Activated naive CD4-positive, alpha-beta T cell treated with anti-CD3 and anti-CD28 coated beads for 36 hours (primary cell): ENCODE measurements at regions of chrX and their contacts with region 1.

Region 1: DNA sequence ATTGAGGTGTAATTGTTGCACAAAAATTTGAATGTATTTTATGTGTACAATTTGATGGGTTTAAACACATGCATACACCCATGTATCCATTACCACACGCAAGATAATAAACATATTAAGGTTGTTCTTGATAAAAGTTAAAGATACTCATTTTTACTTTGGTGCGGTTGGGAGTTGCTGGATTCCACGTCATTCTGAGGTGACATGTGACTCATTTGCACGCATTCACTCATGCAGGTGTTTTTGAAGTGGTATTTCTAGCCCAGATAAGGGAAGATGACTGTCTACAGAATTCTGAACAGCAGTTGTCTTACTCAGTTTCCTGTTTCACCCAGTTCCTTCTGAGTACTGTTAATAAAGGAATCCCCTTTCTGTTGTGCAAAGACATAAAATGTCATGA is 142.0 kb downstream of the RTL3 start:
- DNase-seq: peak; percentile 76
- H3K4me3 Mint-ChIP-seq: no peak overlapping the region
- H3K27ac Mint-ChIP-seq: peak overlapping the region; percentile 86
- H3K4me1 Mint-ChIP-seq: peaks cover 40% of the 10 kb centered on the region
- H3K27me3 Mint-ChIP-seq: no peaks in the 10 kb centered on the region

Region 2: DNA sequence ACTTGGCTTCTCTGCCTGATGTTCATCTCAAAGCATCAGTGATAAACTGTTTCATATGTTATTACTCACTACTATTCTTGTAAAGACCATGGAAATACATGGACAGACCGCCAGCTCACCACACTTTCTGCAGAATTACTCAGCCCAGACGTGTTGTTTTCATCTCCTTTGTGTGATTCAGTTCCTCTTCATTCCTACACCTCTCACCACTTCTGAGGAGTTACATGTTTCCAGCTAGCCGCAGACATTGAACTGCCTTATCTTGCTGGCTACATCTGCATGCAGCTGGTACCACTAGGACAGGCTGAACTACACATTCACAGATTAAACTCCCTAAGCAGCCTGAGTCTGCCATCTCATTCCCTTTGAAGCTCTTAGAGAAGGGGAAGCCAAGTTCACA is 1513.2 kb before region 1 on chrX:
- CTCF ChIA-PET with region 1: no interaction called
- intact Hi-C with region 1: loop called (anchors 2 kb)
- DNase-seq: peak; percentile 72
- H3K4me3 Mint-ChIP-seq: no peak overlapping the region
- H3K27ac Mint-ChIP-seq: peak overlapping the region; percentile 75
- H3K4me1 Mint-ChIP-seq: peaks cover 16% of the 10 kb centered on the region
- H3K27me3 Mint-ChIP-seq: peaks cover 3% of the 10 kb centered on the region

Region 3: DNA sequence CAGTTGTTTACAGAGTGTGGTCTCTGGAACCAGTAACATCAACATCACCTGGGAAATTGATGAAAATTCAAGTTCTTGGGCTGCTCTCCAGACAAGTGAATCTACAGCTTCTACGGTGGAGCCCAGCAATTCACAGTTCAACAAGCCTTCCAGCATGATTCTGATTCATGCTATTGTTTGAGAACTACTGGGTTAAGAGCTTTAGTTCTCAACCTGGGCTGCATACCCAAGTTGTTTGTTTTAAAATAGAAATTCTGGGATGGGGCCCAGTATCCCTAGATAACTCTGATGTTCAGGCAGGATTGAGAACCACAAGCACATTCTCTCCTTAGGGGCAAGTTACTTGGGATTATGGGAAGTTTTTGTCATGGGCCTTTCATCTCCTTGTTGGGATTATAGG is 451.0 kb before region 1 on chrX:
- CTCF ChIA-PET with region 1: no interaction called
- intact Hi-C with region 1: loop called (anchors 1 kb)
- DNase-seq: no peak
- H3K4me3 Mint-ChIP-seq: no peak overlapping the region
- H3K27ac Mint-ChIP-seq: no peak overlapping the region
- H3K4me1 Mint-ChIP-seq: peaks cover 14% of the 10 kb centered on the region
- H3K27me3 Mint-ChIP-seq: no peaks in the 10 kb centered on the region

Region 4: DNA sequence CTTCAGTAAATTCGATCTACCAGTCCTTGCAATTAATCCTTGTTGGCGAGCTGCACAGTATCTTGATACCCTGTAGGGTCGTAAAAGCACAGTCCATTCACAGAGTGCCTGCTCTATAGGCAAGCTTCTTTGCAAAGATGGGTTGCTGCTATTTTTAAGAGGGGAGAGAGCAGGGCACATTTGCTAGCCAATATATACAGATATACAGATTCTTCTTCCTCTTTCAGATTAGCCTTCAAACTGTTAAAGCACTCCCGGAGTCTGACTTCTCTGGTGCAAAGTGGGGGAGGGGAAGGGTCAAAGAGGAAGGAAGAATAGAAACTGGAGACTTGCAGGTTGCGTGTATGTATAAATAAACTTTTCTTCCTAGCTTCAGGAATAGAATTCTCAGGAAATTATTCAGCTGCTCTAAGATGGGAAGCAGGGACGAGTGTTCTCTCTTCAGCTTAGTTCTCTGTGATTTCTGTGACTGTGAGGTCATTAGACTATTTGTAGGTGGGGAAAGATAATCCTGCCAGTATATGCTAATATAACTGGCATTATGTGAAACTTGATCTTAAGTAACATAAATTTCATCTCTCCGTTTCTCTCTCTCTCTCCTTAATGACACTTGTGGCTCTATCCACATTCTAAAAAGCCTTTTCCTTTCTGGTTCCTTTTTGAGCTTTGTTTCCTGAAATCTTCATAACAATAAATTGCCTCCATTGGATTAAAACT is 189.6 kb before region 1 on chrX and contains the start of gene CYSLTR1:
- CTCF ChIA-PET with region 1: no interaction called
- intact Hi-C with region 1: loop called (anchors 1 kb)
- DNase-seq: no peak
- H3K4me3 Mint-ChIP-seq: peak within 1 kb of the TSS; percentile 71
- H3K27ac Mint-ChIP-seq: peak within 1 kb of the TSS; percentile 85
- H3K4me1 Mint-ChIP-seq: peaks cover 58% of the 10 kb centered on the region
- H3K27me3 Mint-ChIP-seq: no peaks in the 10 kb centered on the region
- total RNA-seq, gene CYSLTR1: 2.1 to 2.2 TPM

Region 5: DNA sequence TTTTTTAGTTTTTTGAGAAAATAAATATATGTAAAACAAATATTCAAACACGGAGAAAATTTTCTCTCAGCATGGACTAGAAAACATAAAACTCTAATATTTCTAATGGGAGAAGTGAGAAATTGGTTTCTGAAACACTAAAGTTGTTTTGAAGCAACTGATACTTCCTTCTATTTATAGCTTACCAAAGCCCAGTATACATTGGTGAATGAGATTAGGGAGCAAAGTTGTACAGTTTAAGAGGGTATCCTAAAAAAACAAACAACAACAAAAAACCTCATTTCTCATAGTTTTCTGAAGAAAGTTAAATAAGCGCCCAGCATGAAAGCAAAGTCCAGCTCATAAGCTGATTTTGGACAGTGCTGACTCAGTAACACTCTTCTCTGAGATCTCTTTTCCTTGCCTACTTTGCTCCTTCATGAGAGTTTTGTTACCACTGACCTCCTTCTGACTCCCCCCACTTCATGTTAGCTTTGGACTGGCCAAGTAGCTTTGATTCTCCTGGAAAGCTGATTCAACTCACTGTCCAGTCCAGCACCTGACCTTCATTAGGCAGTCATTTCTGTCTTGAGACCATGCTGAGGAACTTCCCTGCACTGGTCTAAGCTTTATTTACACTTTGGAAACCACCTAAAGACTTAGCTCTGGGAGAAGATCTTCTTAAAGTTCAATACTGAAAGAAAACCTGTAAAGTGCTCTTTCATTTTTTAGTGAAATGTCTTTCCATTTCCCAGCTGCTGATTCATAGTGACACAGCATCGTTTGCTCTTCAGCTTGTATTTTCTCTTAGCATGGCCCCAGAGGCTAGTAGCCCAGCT is 406.3 kb after region 1 on chrX:
- CTCF ChIA-PET with region 1: no interaction called
- intact Hi-C with region 1: loop called (anchors 1 kb)
- DNase-seq: peak; percentile 42
- H3K4me3 Mint-ChIP-seq: no peak overlapping the region
- H3K27ac Mint-ChIP-seq: peak overlapping the region; percentile 83
- H3K4me1 Mint-ChIP-seq: peaks cover 14% of the 10 kb centered on the region
- H3K27me3 Mint-ChIP-seq: no peaks in the 10 kb centered on the region

Region 6: DNA sequence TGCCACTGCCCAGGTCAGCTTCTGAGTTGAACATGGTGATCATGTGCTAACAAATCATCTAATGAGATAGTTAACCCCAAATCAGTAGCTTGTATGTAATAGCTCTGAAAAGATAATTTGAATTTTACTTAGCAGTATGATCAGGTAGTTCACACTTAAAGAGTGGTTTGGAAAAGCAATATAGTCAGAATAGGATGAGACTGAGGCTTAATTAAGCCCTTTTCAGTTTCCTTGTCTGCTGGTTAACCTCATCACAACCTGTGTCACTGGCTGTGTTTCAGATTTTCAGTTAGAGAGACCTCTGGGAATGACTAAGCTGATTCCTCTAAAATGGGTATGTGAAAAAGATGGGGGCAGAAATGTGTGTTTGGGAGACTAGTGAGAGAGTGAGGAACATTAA is 665.5 kb after region 1 on chrX:
- CTCF ChIA-PET with region 1: no interaction called
- intact Hi-C with region 1: loop called (anchors 5 kb)
- DNase-seq: peak; percentile 32
- H3K4me3 Mint-ChIP-seq: peak overlapping the region; percentile 29
- H3K27ac Mint-ChIP-seq: peak overlapping the region; percentile 90
- H3K4me1 Mint-ChIP-seq: peaks cover 68% of the 10 kb centered on the region
- H3K27me3 Mint-ChIP-seq: no peaks in the 10 kb centered on the region